ENCODE measurements at regions of chr9 and their contacts with region 1.

Region 1: DNA sequence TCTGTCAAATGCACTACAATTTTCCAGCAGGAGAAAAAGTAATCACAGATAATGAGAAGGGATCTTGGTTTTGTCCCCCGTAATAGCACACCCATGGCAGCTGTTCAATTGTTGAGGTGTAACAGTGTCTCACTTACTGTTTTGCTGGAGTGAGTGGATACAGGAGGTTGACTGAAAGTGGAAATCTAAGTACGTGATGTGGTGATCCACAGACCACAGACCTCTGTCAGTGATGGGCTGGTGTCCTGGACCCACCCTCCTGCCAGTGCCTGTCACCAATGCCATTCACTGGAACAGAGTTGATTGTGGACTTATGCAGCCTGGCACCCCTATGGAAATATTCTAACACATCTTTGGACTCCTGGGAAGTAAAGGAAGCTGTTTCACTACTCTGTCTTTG is 261.7 kb downstream of the TRPM3 start:
- DNase-seq: no peak
- H3K4me3 ChIP-seq: no peak overlapping the region
- H3K27ac ChIP-seq: no peak overlapping the region
- H3K4me1 ChIP-seq: no peaks in the 10 kb centered on the region
- H3K27me3 ChIP-seq: peaks cover 10% of the 10 kb centered on the region
- CTCF ChIP-seq: no peak

Region 2: GRCh38 chr9:70805949-70806348 is 53.7 kb before region 1 on chr9:
- CTCF ChIA-PET with region 1: no interaction called
- POLR2A ChIA-PET with region 1: no interaction called
- intact Hi-C with region 1: loop called (anchors 5 kb)
- DNase-seq: no peak
- H3K4me3 ChIP-seq: no peak overlapping the region
- H3K27ac ChIP-seq: no peak overlapping the region
- H3K4me1 ChIP-seq: no peaks in the 10 kb centered on the region
- H3K27me3 ChIP-seq: no peaks in the 10 kb centered on the region
- CTCF ChIP-seq: no peak

Measured in PC-9 (cell line).